ENCODE measurements at regions of chr6 and their contacts with region 1.

Region 1: GRCh38 chr6:33248925-33249731 is 22.5 kb downstream of the VPS52 start:
- DNase-seq: peak; percentile 98
- H3K4me3 Mint-ChIP-seq: peak overlapping the region; percentile 85
- H3K27ac Mint-ChIP-seq: peak overlapping the region; percentile 97
- H3K4me1 Mint-ChIP-seq: peaks cover 39% of the 10 kb centered on the region
- H3K27me3 Mint-ChIP-seq: peaks cover 14% of the 10 kb centered on the region

Region 2: DNA sequence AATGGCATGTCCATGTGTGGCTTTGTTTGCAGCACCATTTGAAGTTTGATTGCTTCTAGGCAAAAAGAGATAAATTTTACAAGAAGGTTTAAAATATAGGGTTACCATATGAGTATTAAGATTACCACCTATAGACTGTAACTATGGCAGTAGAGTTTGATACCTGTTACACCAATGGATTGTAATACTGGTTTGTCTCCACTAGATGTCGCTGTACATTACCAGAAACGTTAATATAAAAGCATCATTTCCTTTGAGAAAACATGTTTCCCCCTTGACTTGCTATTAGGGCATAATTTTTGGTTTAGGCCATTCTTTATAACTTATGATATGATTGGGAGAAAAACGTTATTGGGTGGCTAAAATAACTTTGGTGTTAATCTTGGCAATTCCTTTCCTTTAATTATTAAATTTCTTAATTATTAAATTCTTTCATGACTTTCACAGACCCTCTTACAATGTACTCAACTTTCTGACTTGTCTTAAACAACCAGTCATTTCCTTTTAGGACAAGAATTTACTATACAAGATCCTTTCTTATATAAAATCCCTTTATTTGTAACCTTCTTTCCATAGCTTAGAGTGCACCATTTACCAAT is 130.5 kb before region 1 on chr6:
- CTCF ChIA-PET with region 1: interaction called, 86 read pairs
- DNase-seq: no peak
- H3K4me3 Mint-ChIP-seq: no peak overlapping the region
- H3K27ac Mint-ChIP-seq: no peak overlapping the region
- H3K4me1 Mint-ChIP-seq: peaks cover 6% of the 10 kb centered on the region
- H3K27me3 Mint-ChIP-seq: peaks cover 68% of the 10 kb centered on the region

Region 3: DNA sequence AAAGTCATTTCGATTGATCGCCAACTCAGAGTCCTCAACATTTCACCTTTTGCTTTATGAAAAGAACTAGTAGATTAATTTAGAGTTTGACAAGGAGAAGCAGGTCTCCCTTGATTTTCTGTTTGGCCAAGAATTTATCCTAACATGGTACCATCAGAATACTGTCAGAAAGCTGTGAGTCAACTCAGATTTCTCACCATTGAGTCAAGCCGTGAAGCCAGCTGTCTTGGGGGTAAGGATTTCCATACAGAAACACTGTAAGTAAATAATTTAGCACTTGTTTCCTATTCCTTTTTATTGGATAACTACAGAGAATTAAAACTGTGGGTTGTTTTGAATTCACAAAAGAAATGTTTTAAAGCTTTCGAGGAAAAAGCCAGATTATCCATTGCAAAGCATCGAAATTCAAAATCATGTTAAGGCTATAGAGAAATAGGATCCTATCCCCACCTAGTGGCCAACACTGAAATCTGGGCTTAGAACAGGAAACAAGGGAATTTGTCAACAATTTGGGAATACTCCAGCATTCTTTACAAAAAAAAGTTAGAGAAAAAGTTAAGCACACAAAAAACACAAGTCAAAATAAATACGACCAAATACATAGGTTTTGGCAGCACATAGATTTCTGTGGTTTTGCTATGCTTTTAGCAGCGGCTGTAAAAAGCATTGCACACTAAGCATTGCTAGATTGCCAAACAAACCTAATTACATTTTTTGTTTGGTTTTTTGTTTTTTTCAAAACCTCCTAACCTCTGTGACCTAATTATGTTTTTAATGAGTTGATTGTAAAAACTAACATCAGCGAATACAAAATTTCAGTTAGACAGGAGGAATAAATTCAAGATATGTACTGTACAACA is 101.1 kb before region 1 on chr6:
- CTCF ChIA-PET with region 1: interaction called, 12 read pairs
- DNase-seq: no peak
- H3K4me3 Mint-ChIP-seq: no peak overlapping the region
- H3K27ac Mint-ChIP-seq: no peak overlapping the region
- H3K4me1 Mint-ChIP-seq: no peaks in the 10 kb centered on the region
- H3K27me3 Mint-ChIP-seq: peaks cover 39% of the 10 kb centered on the region

Region 4: GRCh38 chr6:33161354-33162331 is 87.5 kb before region 1 on chr6:
- CTCF ChIA-PET with region 1: interaction called, 45 read pairs
- DNase-seq: peak; percentile 87
- H3K4me3 Mint-ChIP-seq: peak overlapping the region; percentile 77
- H3K27ac Mint-ChIP-seq: peak overlapping the region; percentile 49
- H3K4me1 Mint-ChIP-seq: peaks cover 18% of the 10 kb centered on the region
- H3K27me3 Mint-ChIP-seq: peaks cover 48% of the 10 kb centered on the region

Region 5: DNA sequence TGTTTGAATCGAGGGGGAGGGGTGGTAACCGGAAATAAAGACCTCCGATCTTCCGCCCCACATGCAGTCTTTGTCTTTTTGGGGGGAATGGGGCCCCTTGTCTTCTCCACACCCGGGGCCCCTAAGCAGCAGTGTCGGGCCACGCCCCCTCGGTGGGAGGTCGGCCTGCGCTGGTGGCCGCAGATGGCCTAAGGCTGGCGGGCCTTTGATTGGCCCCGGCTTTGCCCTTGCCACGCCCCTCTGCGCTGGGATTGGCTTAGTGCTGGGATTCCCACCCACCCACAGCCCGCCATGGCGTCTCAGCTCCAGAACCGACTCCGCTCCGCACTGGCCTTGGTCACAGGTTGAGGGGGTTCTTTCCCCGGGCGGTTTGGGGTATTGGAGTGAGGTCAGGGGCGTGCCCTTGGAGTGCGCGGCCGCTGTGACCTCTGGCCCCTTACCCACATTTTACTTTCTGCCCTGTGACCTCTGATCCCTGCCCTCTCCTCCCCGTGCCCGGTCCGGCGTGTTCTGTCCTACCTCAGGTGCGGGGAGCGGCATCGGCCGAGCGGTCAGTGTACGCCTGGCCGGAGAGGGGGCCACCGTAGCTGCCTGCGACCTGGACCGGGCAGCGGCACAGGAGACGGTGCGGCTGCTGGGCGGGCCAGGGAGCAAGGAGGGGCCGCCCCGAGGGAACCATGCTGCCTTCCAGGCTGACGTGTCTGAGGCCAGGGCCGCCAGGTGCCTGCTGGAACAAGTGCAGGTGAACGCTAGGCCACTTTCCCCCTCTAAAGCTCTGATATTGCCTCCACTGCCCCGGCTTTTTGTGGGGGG is 44.5 kb before region 1 on chr6 and contains the start of gene HSD17B8:
- CTCF ChIA-PET with region 1: interaction called, 27 read pairs
- DNase-seq: peak; percentile 96
- H3K4me3 Mint-ChIP-seq: peak within 1 kb of the TSS; percentile 90
- H3K27ac Mint-ChIP-seq: peak within 1 kb of the TSS; percentile 81
- H3K4me1 Mint-ChIP-seq: peaks cover 69% of the 10 kb centered on the region
- H3K27me3 Mint-ChIP-seq: no peaks in the 10 kb centered on the region

Region 6: GRCh38 chr6:33276864-33277662 is 27.9 kb after region 1 on chr6 and contains the start of gene B3GALT4:
- CTCF ChIA-PET with region 1: interaction called, 15 read pairs
- DNase-seq: peak; percentile 85
- H3K4me3 Mint-ChIP-seq: peak within 1 kb of the TSS; percentile 91
- H3K27ac Mint-ChIP-seq: peak within 1 kb of the TSS; percentile 97
- H3K4me1 Mint-ChIP-seq: peaks cover 78% of the 10 kb centered on the region
- H3K27me3 Mint-ChIP-seq: peaks cover 4% of the 10 kb centered on the region

Region 7: GRCh38 chr6:33988121-33989015 is 739.2 kb after region 1 on chr6:
- CTCF ChIA-PET with region 1: no interaction called
- DNase-seq: no peak
- H3K4me3 Mint-ChIP-seq: no peak overlapping the region
- H3K27ac Mint-ChIP-seq: no peak overlapping the region
- H3K4me1 Mint-ChIP-seq: peaks cover 2% of the 10 kb centered on the region
- H3K27me3 Mint-ChIP-seq: peaks cover 46% of the 10 kb centered on the region